ENCODE measurements at regions of chr3 and their contacts with region 1.

Region 1: DNA sequence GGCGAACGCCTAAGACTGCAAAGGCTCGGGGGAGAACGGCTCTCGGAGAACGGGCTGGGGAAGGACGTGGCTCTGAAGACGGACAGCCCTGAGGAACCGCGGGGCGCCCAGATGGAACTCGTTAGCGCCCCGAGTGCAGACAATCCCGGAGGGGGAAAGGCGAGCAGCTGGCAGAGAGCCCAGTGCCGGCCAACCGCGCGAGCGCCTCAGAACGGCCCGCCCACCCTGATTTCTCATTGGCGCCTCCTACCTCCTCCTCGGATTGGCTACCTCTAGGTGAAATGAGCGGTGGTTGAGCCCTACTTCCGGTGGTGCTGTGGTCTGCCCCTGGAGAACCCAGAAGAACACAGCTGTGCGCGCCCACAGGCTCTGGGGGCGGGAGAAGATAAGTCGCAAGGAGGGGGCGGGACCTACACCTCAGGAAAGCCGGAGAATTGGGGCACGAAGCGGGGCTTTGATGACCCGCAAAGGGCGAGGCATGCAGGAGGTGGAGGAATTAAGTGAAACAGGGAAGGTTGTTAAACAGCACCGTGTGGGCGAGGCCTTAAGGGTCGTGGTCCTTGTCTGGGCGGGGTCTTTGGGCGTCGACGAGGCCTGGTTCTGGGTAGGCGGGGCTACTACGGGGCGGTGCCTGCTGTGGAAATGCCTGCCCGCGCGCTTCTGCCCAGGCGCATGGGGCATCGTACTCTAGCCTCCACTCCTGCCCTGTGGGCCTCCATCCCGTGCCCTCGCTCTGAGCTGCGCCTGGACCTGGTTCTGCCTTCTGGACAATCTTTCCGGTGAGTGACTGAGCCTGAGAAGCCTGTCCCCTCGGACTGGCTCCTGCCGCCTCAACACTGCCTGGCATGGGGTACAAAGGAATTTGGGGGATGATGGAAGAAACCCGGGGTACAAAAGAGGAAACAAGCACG is at the start of gene OGG1:
- DNase-seq: peak; percentile 96
- H3K4me3 Mint-ChIP-seq: peak within 1 kb of the TSS; percentile 96
- H3K27ac Mint-ChIP-seq: peak within 1 kb of the TSS; percentile 95
- H3K4me1 Mint-ChIP-seq: peaks cover 61% of the 10 kb centered on the region
- H3K27me3 Mint-ChIP-seq: no peaks in the 10 kb centered on the region
- total RNA-seq, gene OGG1: 40.2 and 40.6 TPM in 2 replicates

Region 2: GRCh38 chr3:9704347-9705322 is 45.3 kb before region 1 on chr3:
- intact Hi-C with region 1: no loop called
- DNase-seq: no peak
- H3K4me3 Mint-ChIP-seq: no peak overlapping the region
- H3K27ac Mint-ChIP-seq: no peak overlapping the region
- H3K4me1 Mint-ChIP-seq: no peaks in the 10 kb centered on the region
- H3K27me3 Mint-ChIP-seq: peaks cover 23% of the 10 kb centered on the region

Region 3: DNA sequence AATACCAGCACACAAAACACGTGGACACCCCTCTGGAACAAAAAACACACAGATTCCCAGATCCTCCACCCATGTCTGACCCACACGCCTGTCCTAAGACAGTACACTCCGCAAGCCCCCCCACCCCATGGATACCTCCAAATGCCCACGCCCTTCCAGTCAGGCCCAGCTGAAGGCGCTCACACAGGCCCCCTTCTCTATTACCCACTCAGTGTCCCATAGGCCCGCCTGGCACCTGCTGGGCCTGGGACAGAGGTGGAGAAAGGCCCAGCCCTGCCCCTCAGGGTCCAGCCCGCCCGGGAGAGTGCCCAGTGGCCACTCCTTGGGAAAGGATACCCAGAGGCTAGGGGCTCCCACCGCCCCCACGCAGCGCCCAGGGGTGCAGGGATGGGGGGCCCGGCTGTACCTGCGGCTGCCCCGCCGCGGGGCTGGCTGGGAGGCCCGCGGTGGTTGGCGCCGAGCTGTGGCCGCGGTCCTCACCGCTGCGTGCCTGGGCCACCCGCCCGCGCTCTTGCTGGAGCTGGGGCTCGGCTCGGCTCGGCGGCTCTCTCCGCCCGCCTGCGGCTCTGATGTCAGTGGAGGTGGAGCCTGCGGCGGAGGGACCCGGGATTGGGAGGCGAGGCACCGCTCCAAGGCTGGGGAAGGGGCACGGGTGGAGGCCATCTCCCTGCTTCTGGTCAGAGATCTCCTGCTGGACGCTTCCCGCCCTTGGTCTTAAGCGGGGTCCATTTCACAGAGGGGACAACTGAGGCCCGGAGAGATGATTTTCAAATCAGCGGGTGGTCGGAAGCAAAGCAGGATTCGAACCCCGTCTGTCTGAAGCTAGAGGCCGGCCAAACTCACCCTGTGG is 19.8 kb after region 1 on chr3 and contains the start of gene CAMK1:
- intact Hi-C with region 1: loop called (anchors 1 kb)
- DNase-seq: peak; percentile 67
- H3K4me3 Mint-ChIP-seq: peak within 1 kb of the TSS; percentile 80
- H3K27ac Mint-ChIP-seq: peak within 1 kb of the TSS; percentile 71
- H3K4me1 Mint-ChIP-seq: peaks cover 30% of the 10 kb centered on the region
- H3K27me3 Mint-ChIP-seq: peaks cover 2% of the 10 kb centered on the region
- total RNA-seq, gene CAMK1: 55.0 and 57.8 TPM in 2 replicates

Region 4: DNA sequence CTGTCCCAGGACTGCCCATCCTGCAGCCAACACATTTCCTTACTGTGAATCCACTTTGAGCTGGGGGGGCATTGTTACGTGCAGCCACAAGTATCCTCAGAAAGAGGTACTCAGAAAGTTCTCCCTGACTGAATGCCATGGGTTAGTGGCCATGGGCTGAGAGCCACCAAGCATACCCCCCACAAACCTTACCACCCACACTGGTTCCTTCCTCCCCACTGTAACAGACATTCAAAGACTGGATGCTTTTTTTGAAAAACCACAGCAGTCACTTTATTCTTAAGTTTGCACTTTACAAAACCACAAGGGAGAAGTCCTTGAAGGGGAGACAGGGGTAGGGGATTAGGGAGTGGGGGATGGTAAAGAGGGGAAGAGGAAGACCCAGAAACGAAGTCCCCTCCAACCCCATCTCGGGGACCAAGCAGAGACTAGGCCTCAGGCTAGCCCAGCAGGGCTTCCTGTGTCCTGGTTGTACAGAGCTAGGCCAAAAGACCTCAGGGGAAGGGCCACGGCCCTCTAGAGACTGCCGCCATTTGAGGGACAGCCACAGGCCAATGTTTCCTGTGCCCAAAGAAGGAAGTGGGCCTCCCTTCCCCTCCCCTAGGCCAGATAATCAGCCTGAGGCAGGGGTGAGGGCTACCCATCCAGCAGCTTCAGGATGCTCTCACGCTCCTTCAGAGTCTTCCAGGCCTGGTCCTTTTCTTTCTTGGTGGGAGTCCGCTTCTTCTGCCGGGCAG is 30.0 kb after region 1 on chr3:
- intact Hi-C with region 1: loop called (anchors 1 kb)
- DNase-seq: peak; percentile 23
- H3K4me3 Mint-ChIP-seq: peak overlapping the region; percentile 31
- H3K27ac Mint-ChIP-seq: peak overlapping the region; percentile 90
- H3K4me1 Mint-ChIP-seq: peaks cover 55% of the 10 kb centered on the region
- H3K27me3 Mint-ChIP-seq: no peaks in the 10 kb centered on the region

Region 5: DNA sequence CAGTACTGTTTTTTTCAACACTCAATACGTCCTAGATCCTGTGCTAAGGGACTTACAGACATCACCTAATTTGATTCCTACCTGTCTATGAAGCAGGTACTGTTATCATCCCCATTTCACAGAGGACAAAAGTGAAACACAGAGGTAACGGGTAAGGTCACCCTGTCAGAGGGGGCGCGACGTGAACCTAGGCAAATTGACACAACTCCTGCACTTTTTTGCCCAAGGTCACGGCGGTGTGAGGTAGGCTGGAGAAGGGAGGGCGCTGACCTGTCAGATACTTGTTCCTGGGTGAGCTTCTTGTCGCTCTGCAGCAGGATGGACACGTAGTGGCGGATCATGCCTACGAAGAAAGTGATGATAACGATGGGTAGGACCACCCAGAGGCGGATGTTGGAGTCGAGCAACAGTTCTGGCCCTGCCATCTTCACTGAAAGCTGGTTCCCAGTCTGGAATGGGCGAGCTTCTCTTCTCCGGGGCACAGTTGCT is 236.4 kb after region 1 on chr3:
- intact Hi-C with region 1: loop called (anchors 5 kb)
- DNase-seq: no peak
- H3K4me3 Mint-ChIP-seq: peak overlapping the region; percentile 97
- H3K27ac Mint-ChIP-seq: peak overlapping the region; percentile 98
- H3K4me1 Mint-ChIP-seq: peaks cover 27% of the 10 kb centered on the region
- H3K27me3 Mint-ChIP-seq: no peaks in the 10 kb centered on the region